Gastrocnemius medialis (tissue), 4 donors: ENCODE measurements at regions of chr7 and their contacts with region 1.

Region 1: DNA sequence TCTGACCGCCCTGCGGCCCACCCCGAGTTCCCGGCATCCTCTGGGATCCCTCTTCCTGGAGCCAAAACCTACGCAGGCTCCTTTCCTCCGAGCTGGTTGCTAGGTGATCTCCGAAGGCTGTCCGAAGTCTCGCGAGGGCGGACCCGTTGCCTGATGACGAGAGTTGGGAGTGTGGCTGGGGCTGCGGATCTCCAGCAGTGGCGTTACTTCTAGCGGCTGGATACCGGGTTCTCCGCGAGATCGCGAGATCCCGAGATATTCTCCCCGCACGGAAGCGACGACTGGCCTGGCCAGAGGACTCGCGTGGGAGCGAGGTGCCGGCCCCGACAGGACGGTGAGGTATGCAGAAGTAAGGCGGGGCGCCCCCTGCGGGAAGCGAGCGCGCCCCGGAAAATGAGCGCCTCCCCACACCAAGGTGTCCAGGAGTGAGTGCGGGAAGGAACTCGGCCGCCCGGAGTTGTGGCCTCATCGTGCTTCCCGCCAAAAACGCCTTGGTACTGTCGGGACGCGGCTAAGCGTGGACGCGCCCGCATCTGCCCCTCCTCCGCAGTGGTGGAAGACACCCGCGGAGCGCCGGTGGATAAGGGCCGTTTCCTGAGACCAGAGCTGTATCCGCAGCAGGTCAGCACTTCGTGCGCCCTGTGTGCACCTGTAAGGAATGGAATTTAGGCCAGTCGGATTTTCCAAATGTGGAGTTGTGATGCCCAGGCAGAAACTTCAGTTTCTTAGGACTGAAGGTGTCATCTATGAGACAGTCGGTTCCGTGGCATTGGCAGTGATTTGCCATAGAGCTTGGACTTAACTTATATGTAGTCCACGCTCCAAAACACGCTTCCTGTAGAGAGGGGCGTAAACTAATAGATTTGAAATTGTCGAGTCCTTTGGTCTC is at the start of gene AGBL3:
- DNase-seq: peak; percentile 83 to 93
- ATAC-seq: peak; percentile 96 to 99
- H3K4me3 ChIP-seq: peak within 1 kb of the TSS; percentile 75 to 92 (median 78)
- H3K27ac ChIP-seq: peak within 1 kb of the TSS; percentile 87 to 91 (median 87)
- H3K4me1 ChIP-seq: peaks cover 11 to 17% of the 10 kb centered on the region in 2 donors
- H3K27me3 ChIP-seq: no peaks in the 10 kb centered on the region
- CTCF ChIP-seq: peak; percentile 51 to 73 (median 66)
- POLR2A ChIP-seq: peak in 1 of 2 donors; percentile 60
- total RNA-seq, gene AGBL3: 0.61 to 1.9 (median 1.0) TPM

Region 2: DNA sequence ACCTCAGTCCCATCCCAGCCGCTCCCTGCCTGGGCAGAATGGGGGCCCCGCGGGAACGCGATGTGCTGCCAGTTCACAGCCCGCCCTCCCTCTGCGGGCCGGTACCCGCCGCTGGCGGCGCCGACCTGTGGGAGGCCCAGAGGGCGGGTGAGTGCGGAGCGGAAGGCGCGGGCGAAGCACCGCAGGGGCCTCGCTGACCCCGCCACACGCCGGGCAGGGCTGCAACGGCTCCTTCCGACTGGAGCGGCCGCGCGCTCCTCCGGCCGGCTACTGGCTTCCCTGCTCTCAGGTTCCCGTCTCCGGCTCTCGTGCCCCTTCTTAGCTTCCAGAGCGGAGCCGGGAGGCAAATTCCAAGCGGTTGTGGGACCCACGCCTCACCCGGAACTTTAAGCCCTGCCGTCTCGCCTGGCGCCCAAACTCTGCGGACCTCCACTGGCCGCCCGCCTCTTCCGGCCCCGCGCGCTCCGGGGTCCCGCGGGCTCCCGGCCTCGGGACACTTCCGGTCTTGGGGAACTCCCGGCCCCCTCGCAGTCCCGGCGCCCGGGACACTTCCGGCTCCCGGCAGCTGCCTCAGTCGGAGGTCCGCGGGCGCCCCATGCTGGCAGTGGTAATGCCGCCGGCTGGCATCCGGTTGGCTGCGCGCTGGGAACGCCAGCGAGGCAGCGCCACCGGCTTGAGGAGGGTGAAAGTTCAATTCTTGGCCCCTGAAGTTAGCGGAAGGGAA is 183.8 kb after region 1 on chr7 and contains the start of gene CYREN:
- in situ Hi-C with region 1: loop called in 1 of 4 experiments (anchors 25 kb)
- intact Hi-C with region 1: loop called (anchors 1 kb)
- DNase-seq: peak; percentile 90 to 95
- ATAC-seq: peak; percentile 63 to 74
- H3K4me3 ChIP-seq: peak within 1 kb of the TSS; percentile 63 to 85 (median 72)
- H3K27ac ChIP-seq: peak within 1 kb of the TSS; percentile 93 to 97 (median 96)
- H3K4me1 ChIP-seq: peaks cover 53 to 59% of the 10 kb centered on the region in 2 donors
- H3K27me3 ChIP-seq: no peaks in the 10 kb centered on the region
- CTCF ChIP-seq: peak; percentile 54 to 77 (median 66)
- POLR2A ChIP-seq: peak; percentile 81 to 89
- total RNA-seq, gene CYREN: 11.8 to 51.5 (median 20.4) TPM

Region 3: DNA sequence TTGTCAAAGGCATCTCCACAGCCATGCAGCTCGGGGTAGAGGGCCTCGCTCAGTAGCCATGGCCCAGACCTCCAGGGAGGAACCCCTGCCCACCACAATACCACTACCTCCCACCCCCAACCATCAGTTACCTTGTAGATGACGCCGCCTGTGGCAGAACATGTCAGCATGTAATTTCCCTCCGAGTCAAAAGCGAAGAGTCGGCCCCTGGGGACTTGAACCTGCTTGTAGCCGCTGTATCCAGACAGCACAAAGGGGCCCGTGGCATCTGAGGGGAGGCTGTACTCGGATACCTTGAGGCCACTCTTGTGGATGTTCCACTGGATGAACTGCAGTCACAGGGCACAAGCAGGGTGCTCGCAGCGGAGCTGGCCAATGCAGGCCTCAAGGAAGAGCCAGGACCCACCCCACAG is 200.2 kb after region 1 on chr7:
- in situ Hi-C with region 1: loop called in 1 of 4 experiments (anchors 25 kb)
- intact Hi-C with region 1: no loop called
- DNase-seq: no peak
- ATAC-seq: no peak
- H3K4me3 ChIP-seq: no peak overlapping the region
- H3K27ac ChIP-seq: no peak overlapping the region
- H3K4me1 ChIP-seq: peaks cover 0 to 5% of the 10 kb centered on the region in 2 donors
- H3K27me3 ChIP-seq: no peaks in the 10 kb centered on the region
- CTCF ChIP-seq: no peak
- POLR2A ChIP-seq: no peak